Right ventricle myocardium inferior (tissue), 1 donor: ENCODE measurements at regions of chr2 and their contacts with region 1.

Region 1: GRCh38 chr2:230793572-230794359 is 71.0 kb upstream of the ITM2C start:
- DNase-seq: peak; percentile 76
- ATAC-seq: peak; percentile 78

Region 2: DNA sequence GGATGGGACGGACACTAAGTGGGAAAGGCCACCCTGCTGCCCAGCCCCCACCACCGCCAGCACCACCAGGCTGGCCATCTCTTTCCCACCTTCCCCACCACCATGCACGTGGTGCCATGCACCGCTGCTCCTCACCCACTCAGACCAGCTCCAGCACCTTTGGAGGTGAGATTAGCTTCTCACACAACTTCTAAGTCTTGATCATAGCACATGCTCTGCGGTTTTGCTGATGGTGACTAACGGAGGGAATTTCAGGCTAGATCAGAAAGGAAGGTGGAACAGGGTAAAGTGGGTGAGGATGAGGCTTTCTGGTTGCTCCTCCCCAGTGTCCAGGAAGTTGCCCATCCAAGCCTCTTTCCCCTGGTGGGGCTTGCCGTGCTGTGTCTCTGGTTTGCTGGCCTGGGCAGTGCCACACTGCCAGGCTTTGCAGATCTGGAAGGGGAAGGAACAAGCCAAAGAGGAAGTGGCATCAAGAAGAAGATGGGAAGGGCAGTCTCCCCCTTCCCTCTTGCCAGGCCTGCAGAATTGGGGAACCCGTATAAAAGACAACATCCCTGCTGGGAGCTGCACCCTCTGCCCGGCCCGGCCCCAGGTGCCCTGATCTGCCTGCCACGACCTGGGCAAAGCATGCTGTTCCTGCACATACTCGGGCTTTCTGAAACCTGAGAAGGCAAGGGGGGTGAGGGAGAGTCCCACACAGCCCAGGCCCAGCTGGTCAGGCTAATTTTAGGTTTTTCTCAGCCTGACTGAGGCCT is 125.4 kb before region 1 on chr2:
- intact Hi-C with region 1: loop called (anchors 5 kb)
- DNase-seq: peak; percentile 77
- ATAC-seq: peak; percentile 78